HEK293 (cell line): ENCODE measurements at regions of chr2 and their contacts with region 1.

Region 1: GRCh38 chr2:20642055-20642971 is 8.6 kb downstream of the HS1BP3 start:
- H3K4me3 ChIP-seq: no peak overlapping the region
- H3K27ac ChIP-seq: no peak overlapping the region
- H3K4me1 ChIP-seq: no peaks in the 10 kb centered on the region
- CTCF ChIP-seq: peak; percentile 88

Region 2: DNA sequence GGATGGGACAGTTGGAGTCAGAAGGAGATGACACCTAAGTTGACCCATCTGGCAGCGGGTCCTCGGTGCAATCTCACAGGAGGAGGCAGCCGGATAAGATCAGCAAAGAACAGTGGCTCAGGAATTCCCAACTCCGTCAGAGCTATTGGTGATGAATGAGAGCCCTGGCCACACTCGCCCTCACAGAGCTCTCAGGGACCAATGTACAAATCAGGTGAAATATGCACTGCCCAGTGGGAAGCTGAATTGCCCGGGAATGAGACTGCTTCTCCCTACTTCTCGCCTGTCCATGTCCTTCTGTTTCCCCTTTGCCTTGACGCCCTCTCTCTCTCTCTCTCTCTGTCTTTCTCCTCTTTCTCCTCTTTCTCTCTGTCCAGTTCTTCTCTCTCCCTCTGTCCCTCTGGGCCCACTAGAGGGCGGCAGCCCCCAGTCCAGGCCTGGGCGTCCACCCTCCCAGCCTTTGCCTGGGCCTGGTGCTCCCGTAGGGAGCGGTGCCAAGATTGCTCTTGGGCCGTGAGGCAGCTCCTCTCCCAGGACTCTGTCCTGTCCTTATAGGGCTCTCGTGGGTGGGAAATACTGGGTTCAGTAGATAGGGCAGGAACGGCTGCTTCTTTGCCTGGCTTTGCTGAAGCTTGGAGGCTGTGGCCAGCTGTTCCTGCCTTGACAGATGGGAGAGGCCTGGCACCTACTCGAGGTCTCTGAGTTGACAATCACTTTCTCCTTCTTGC is 263.4 kb before region 1 on chr2:
- CTCF ChIA-PET with region 1: interaction called, 20 read pairs
- POLR2A ChIA-PET with region 1: no interaction called
- H3K4me3 ChIP-seq: no peak overlapping the region
- H3K27ac ChIP-seq: no peak overlapping the region
- H3K4me1 ChIP-seq: peaks cover 10% of the 10 kb centered on the region
- CTCF ChIP-seq: peak; percentile 92

Region 3: GRCh38 chr2:20384953-20385352 is 257.4 kb before region 1 on chr2:
- CTCF ChIA-PET with region 1: interaction called, 20 read pairs
- POLR2A ChIA-PET with region 1: no interaction called
- H3K4me3 ChIP-seq: no peak overlapping the region
- H3K27ac ChIP-seq: no peak overlapping the region
- H3K4me1 ChIP-seq: peaks cover 10% of the 10 kb centered on the region
- CTCF ChIP-seq: no peak

Region 4: GRCh38 chr2:20398956-20399567 is 243.3 kb before region 1 on chr2:
- CTCF ChIA-PET with region 1: interaction called, 25 read pairs
- POLR2A ChIA-PET with region 1: no interaction called
- H3K4me3 ChIP-seq: no peak overlapping the region
- H3K27ac ChIP-seq: no peak overlapping the region
- H3K4me1 ChIP-seq: no peaks in the 10 kb centered on the region
- CTCF ChIP-seq: no peak

Region 5: DNA sequence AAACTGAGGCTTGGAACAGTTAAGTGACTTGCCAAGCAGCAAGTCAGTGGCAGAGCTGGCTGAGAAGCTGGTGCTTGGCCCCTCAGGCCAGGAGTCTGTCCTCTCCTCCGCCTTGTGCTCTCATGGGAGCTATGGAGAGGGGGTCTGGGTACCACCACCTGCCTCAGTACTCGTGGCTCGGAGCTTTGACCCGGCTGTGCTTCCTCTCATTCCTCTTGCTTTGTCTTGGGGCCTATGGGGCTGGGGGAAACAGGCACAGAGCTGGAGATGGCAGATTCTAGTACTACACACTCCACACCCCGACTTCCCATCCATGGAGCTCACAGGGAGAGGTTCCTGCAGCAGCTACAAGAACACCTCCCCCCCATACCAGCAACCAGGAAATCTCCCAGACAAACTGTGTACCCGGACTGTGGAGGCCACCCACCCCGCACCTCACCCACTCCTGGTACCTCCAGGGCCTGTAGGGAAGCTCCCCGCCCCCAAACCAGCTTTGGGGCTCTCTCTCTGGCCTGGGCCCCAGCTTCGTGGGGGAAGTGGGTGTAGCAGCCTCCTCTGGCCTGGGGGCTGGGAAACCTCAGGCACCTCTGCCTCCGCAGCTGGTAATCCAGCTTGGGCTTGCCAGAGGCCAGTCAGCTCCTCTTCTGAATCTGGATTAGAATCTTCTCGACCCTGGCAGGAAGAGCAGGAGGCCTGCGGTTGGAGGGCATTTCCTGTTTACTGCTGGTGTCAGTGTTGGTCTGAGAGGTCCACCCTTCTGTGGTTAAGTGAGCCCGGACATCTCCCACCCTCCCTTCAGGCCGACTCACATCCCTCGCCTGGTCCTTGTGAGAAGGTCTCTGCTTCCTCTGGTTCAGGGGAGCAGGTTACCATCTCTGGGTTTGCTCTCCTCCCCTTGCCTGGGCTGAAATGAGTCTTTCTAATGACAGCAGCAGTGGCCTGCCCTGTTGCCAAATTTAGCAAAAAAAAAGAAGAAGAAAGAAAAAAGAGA is 217.7 kb before region 1 on chr2:
- CTCF ChIA-PET with region 1: interaction called, 20 read pairs
- POLR2A ChIA-PET with region 1: no interaction called
- H3K4me3 ChIP-seq: no peak overlapping the region
- H3K27ac ChIP-seq: no peak overlapping the region
- H3K4me1 ChIP-seq: no peaks in the 10 kb centered on the region
- CTCF ChIP-seq: no peak

Region 6: GRCh38 chr2:20438334-20439192 is 203.8 kb before region 1 on chr2:
- CTCF ChIA-PET with region 1: interaction called, 93 read pairs
- POLR2A ChIA-PET with region 1: interaction called, 3 read pairs
- H3K4me3 ChIP-seq: peak overlapping the region; percentile 2
- H3K27ac ChIP-seq: no peak overlapping the region
- H3K4me1 ChIP-seq: 0 out of 2 replicates have a peak, but pooled peaks cover 2% of the 10 kb centered on the region
- CTCF ChIP-seq: no peak

Region 7: DNA sequence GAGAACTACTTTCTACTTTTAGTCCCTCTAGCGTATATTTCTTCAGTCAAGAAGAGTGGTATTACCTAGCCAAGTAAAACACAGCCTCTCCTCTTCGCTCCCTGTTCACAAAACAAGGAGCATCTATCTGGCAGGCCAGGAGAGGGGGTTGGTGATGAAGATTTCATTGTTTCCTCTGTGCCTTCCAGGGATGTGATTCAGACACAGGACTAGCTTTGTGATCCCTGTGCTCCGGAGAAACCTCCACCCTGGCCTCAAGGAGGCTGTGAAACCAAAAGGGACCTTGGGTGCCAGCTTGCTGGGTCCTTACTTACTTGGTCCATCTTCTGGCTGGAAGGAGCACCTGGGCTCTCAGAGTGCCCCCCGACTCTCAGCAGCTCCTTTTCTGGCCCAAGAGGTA is 189.8 kb before region 1 on chr2:
- CTCF ChIA-PET with region 1: interaction called, 22 read pairs
- POLR2A ChIA-PET with region 1: interaction called, 62 read pairs
- H3K4me3 ChIP-seq: no peak overlapping the region
- H3K27ac ChIP-seq: no peak overlapping the region
- H3K4me1 ChIP-seq: peaks cover 6% of the 10 kb centered on the region
- CTCF ChIP-seq: peak; percentile 27; the same call in 1 of the 2 replicates

Region 8: DNA sequence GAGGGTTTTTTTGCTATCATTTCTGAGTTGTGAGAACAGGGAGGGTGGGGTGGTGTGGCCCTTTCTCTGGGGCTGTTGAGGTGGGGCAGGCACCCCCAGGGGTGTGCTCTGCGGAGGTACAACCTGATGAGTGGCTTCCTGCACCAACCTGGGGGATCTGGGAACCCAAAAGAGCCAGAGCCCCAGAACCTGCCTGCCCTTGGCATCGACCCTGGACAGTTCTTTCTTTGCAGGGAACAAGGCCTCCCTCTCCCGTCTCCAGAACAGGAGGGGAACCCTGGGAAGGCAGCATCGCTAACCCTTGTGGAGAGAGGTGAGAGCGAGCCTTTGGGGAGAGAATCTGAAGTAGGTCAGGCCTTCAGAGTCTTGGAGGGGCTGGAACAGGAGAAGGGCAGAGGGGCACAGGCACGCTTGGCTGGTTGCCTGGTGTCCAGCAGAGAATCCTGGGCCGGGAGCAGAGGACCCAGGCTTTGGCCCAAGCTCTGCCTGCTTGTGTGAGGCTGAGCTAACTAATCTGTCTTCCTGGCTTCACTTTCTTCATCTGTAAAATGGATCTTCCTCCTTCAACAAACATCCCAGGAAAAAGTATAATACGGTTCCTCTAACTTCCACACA is 110.6 kb before region 1 on chr2:
- CTCF ChIA-PET with region 1: no interaction called
- POLR2A ChIA-PET with region 1: no interaction called
- H3K4me3 ChIP-seq: no peak overlapping the region
- H3K27ac ChIP-seq: no peak overlapping the region
- H3K4me1 ChIP-seq: no peaks in the 10 kb centered on the region
- CTCF ChIP-seq: no peak